Activated naive CD4-positive, alpha-beta T cell treated with anti-CD3 and anti-CD28 coated beads, Interleukin-2, amount 10 ng/mL, durations not matched to agents 7 days and 5 days (primary cell): ENCODE measurements at regions of chr16 and their contacts with region 1.

Region 1: GRCh38 chr16:70653809-70654771 is 7.7 kb downstream of the IL34 start:
- DNase-seq: peak; percentile 89
- H3K4me3 Mint-ChIP-seq: peak overlapping the region; percentile 6
- H3K27ac Mint-ChIP-seq: no peak overlapping the region
- H3K4me1 Mint-ChIP-seq: peaks cover 5% of the 10 kb centered on the region
- H3K27me3 Mint-ChIP-seq: peaks cover 21% of the 10 kb centered on the region

Region 2: GRCh38 chr16:70331588-70332358 is 322.3 kb before region 1 on chr16:
- CTCF ChIA-PET with region 1: interaction called, 13 read pairs
- DNase-seq: peak; percentile 38
- H3K4me3 Mint-ChIP-seq: no peak overlapping the region
- H3K27ac Mint-ChIP-seq: peak overlapping the region; percentile 52
- H3K4me1 Mint-ChIP-seq: no peaks in the 10 kb centered on the region
- H3K27me3 Mint-ChIP-seq: no peaks in the 10 kb centered on the region

Region 3: DNA sequence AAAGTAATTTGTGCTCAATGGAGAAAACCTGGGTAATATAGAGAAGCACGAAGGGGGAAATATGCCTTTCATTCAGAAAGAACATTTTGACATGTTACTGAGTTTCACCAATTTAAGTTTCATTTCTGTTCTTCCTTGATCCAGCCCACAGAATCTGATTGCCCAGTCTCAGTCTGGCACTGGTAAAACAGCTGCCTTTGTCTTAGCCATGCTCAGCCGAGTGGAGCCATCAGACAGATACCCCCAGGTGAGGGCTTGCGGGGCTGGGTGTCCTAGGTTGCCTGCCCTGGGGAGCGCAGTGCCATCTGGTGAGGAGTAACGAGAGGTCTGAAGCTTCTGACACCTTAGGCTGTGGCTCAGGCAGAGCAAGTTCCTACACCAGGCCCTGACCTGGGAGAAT is 289.7 kb before region 1 on chr16:
- CTCF ChIA-PET with region 1: interaction called, 17 read pairs
- DNase-seq: no peak
- H3K4me3 Mint-ChIP-seq: no peak overlapping the region
- H3K27ac Mint-ChIP-seq: no peak overlapping the region
- H3K4me1 Mint-ChIP-seq: no peaks in the 10 kb centered on the region
- H3K27me3 Mint-ChIP-seq: no peaks in the 10 kb centered on the region

Region 4: GRCh38 chr16:70508752-70509151 is 145.3 kb before region 1 on chr16:
- CTCF ChIA-PET with region 1: interaction called, 11 read pairs
- DNase-seq: no peak
- H3K4me3 Mint-ChIP-seq: no peak overlapping the region
- H3K27ac Mint-ChIP-seq: peak overlapping the region; percentile 74
- H3K4me1 Mint-ChIP-seq: peaks cover 12% of the 10 kb centered on the region
- H3K27me3 Mint-ChIP-seq: no peaks in the 10 kb centered on the region

Region 5: GRCh38 chr16:70666336-70666735 is 12.2 kb after region 1 on chr16:
- CTCF ChIA-PET with region 1: interaction called, 11 read pairs
- DNase-seq: no peak
- H3K4me3 Mint-ChIP-seq: no peak overlapping the region
- H3K27ac Mint-ChIP-seq: no peak overlapping the region
- H3K4me1 Mint-ChIP-seq: no peaks in the 10 kb centered on the region
- H3K27me3 Mint-ChIP-seq: no peaks in the 10 kb centered on the region

Region 6: DNA sequence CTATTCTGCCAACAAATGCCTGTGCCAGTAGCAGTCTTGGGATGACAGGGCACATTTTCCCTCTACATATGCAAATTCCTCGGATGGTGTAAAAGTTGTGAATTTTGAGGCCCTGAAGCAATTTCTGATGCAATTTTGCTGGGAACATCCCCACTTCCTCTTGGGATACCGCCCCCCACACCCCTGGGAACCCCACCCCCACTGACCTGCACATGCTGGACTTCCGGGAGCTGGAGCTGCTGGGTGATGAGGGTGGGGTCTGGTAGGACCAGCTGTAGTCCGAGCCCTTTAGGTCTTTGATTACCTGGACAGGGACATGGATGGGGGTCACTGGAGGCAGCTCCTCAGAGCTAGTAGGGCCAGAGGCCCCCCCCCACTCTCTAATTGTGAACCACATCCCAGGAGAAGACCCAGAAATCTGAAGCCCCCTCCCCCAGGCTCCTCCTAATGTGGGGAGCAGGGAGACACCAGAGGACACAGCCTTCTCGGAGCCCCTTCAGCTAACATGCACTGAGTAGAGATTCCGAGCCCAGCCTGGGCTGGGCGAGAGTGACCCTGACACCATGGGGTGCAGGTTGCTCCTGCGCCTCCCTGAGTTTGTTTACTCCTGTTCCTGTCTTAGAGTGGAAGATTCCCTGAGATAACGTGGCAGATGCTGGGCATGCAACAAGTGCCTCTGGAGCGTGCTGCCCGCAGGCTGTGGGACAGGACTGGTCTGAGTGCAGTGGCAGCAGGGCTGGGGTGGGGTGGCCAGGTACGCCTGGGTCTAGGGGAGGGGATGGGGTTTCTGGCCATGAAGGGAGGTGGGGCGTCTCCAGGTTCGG is 22.8 kb after region 1 on chr16:
- CTCF ChIA-PET with region 1: no interaction called
- DNase-seq: no peak
- H3K4me3 Mint-ChIP-seq: no peak overlapping the region
- H3K27ac Mint-ChIP-seq: no peak overlapping the region
- H3K4me1 Mint-ChIP-seq: peaks cover 16% of the 10 kb centered on the region
- H3K27me3 Mint-ChIP-seq: peaks cover 6% of the 10 kb centered on the region

Region 7: DNA sequence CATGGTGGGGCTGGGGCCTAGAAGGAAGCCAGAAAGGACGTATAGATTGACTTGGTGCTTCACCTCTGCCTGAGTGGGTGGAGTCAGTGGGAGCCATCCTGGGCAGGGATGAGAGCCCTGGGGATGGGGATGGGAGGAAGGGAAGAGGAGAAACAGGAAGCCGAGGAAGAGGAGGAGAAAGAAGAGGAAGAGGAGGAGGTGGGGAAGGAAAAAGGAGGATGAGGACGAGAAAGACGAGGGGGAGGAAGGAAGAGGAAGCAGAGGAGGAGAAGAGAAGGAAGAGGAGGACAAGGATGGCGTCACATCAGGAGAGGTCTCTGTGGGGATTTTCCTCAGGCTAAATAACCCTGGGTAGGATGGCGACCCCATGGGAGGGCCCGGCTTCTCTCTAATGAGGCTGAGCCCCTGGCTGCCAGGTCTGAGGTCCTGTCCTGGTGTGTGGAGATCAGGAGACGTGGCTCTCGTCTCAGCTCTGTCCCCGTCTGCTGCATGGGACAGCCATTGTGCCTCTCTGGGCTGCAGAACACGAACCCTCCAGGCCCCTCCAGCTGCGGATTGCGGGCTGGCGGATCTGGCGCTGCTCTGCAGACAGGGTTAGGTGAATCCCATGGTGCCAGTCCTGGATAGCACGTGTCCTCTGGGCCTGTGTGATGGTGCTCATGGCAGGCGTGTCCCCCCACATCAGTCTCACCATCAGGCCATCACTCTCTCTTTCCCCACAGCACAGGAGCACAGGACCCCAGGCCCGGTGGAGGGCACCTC is 67.3 kb after region 1 on chr16:
- CTCF ChIA-PET with region 1: no interaction called
- DNase-seq: no peak
- H3K4me3 Mint-ChIP-seq: no peak overlapping the region
- H3K27ac Mint-ChIP-seq: no peak overlapping the region
- H3K4me1 Mint-ChIP-seq: no peaks in the 10 kb centered on the region
- H3K27me3 Mint-ChIP-seq: no peaks in the 10 kb centered on the region